Posterior cingulate gyrus (tissue), 11 donors: ENCODE measurements at regions of chr19 and their contacts with region 1.

Region 1: GRCh38 chr19:45059278-45059965 is 16.9 kb downstream of the ZNF296 start:
- DNase-seq: peak in 9 of 10 donors; percentile 59 to 96 (median 84)

Region 2: DNA sequence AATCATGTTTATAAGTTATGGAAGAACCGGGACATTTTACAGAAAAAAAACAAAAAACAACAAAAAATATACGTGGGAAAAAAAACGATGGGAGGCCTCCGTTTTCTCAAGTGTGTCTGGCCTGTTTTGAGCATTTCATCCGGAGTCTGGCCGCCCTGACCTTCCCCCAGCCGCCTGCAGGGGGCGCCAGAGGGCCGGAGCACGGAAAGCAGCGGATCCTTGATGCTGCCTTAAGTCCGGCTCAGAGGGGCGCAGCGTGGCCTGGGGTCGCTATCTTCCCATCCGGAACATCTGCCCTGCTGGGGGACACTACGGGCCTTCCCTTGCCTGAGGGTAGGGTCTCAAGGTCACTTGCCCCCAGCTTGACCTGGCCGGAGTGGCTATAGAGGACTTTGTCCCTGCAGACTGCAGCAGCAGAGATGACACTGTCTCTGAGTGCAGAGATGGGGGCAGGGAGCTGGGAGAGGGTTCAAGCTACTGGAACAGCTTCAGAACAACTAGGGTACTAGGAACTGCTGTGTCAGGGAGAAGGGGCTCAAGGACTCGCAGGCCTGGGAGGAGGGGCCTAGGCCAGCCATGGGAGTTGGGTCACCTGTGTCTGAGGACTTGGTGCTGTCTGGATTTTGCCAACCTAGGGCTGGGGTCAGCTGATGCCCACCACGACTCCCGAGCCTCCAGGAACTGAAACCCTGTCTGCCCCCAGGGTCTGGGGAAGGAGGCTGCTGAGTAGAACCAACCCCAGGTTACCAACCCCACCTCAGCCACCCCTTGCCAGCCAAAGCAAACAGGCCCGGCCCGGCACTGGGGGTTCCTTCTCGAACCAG is 155.6 kb before region 1 on chr19:
- intact Hi-C with region 1: loop called (anchors 5 kb)
- DNase-seq: peak; percentile 61 to 96 (median 82)

Region 3: GRCh38 chr19:45016388-45017319 is 42.8 kb before region 1 on chr19:
- intact Hi-C with region 1: loop called (anchors 1 kb)
- DNase-seq: peak; percentile 38 to 93 (median 80)

Region 4: DNA sequence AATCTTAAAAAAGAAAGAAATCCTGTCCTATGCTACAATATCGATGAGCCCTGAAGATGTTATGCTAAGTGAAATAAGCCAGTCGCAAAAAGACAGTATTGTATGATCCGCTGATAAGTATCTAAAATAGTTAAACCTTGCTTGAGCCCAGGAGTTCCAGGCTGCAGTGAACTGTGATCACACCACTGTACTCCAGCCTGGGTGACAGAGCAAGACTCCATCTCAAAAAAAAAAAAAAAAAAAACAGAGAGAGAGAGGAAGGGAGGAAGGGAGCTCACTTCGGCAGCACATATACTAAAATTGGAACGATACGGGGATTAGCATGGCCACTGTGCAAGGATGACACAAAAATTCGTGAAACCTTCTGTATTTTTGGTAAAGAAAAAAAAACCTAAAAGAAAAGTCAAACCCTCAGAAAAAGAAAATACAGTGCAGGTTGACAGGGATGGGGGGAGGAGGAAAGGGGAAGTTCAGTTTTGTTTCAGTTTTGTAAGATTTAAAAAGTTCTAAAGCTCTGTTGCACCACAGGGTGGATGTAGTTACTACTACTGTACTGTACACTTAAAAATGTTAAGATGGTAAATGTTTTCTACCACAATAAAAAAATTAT is 12.1 kb before region 1 on chr19:
- intact Hi-C with region 1: no loop called
- DNase-seq: no peak